ENCODE measurements at regions of chr9 and their contacts with region 1.

Region 1: GRCh38 chr9:36873247-36873875 is 160.7 kb downstream of the PAX5 start:
- H3K4me3 ChIP-seq: no peak overlapping the region
- H3K27ac ChIP-seq: no peak overlapping the region
- H3K4me1 ChIP-seq: no peaks in the 10 kb centered on the region
- CTCF ChIP-seq: peak; percentile 75

Region 2: GRCh38 chr9:36855448-36856315 is 17.7 kb before region 1 on chr9:
- CTCF ChIA-PET with region 1: interaction called, 58 read pairs
- POLR2A ChIA-PET with region 1: no interaction called
- H3K4me3 ChIP-seq: no peak overlapping the region
- H3K27ac ChIP-seq: no peak overlapping the region
- H3K4me1 ChIP-seq: no peaks in the 10 kb centered on the region
- CTCF ChIP-seq: no peak

Region 3: GRCh38 chr9:36884721-36885120 is 11.4 kb after region 1 on chr9:
- CTCF ChIA-PET with region 1: interaction called, 45 read pairs
- POLR2A ChIA-PET with region 1: no interaction called
- H3K4me3 ChIP-seq: no peak overlapping the region
- H3K27ac ChIP-seq: no peak overlapping the region
- H3K4me1 ChIP-seq: no peaks in the 10 kb centered on the region
- CTCF ChIP-seq: no peak

Region 4: GRCh38 chr9:36903541-36904435 is 30.4 kb after region 1 on chr9:
- CTCF ChIA-PET with region 1: interaction called, 51 read pairs
- POLR2A ChIA-PET with region 1: interaction called, 4 read pairs
- H3K4me3 ChIP-seq: no peak overlapping the region
- H3K27ac ChIP-seq: peak overlapping the region; percentile 12; the same call in 1 of the 2 replicates
- H3K4me1 ChIP-seq: peaks cover 21% of the 10 kb centered on the region
- CTCF ChIP-seq: no peak

Region 5: DNA sequence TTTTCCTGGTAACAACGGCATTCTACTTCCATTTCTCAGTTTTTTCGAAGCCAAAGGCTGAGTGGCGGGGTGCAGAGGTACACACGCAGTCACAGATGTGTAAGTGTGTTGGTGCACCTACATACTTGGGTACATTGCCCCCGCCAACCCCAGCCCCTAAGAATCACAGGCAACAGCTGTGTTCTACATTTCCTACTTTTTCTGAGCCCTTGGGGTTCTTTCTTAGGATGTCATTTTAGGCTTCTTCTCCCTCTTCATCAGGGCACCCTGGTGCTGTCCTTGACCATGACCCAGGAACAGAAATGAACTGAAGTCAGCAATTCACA is 56.0 kb after region 1 on chr9:
- CTCF ChIA-PET with region 1: interaction called, 11 read pairs
- POLR2A ChIA-PET with region 1: no interaction called
- H3K4me3 ChIP-seq: no peak overlapping the region
- H3K27ac ChIP-seq: peak overlapping the region; percentile 57
- H3K4me1 ChIP-seq: peaks cover 14% of the 10 kb centered on the region
- CTCF ChIP-seq: no peak

Region 6: GRCh38 chr9:37004424-37004935 is 131.1 kb after region 1 on chr9:
- CTCF ChIA-PET with region 1: interaction called, 51 read pairs
- POLR2A ChIA-PET with region 1: no interaction called
- H3K4me3 ChIP-seq: no peak overlapping the region
- H3K27ac ChIP-seq: no peak overlapping the region
- H3K4me1 ChIP-seq: no peaks in the 10 kb centered on the region
- CTCF ChIP-seq: no peak